ENCODE measurements at regions of chr19 and their contacts with region 1.

Region 1: GRCh38 chr19:38402967-38403861 is at the start of gene FAM98C:
- DNase-seq: peak; percentile 89 to 97 (median 96)
- H3K4me3 ChIP-seq: peak within 1 kb of the TSS; percentile 57 to 99 (median 91)
- H3K27ac ChIP-seq: peak within 1 kb of the TSS; percentile 20 to 97 (median 89)
- H3K27me3 ChIP-seq: no peaks in the 10 kb centered on the region
- CTCF ChIP-seq: peak; percentile 95 to 100 (median 100)
- total RNA-seq, gene FAM98C: 31.5 to 65.9 (median 44.2) TPM

Region 2: GRCh38 chr19:38374429-38375176 is 28.6 kb before region 1 on chr19 and contains the start of gene PSMD8:
- intact Hi-C with region 1: loop called in 1 of 2 experiments (anchors 2 kb)
- DNase-seq: peak; percentile 99 to 100 (median 100)
- H3K4me3 ChIP-seq: peak within 1 kb of the TSS; percentile 63 to 99 (median 93)
- H3K27ac ChIP-seq: peak within 1 kb of the TSS; percentile 66 to 97 (median 90)
- H3K27me3 ChIP-seq: no peaks in the 10 kb centered on the region
- CTCF ChIP-seq: peak in 55 of 56 donors; percentile 17 to 87 (median 55)
- total RNA-seq, gene PSMD8: 65.8 to 185 (median 140) TPM

Region 3: GRCh38 chr19:38618590-38619360 is 215.6 kb after region 1 on chr19 and contains the start of gene EIF3K:
- intact Hi-C with region 1: loop called (anchors 5 kb)
- DNase-seq: peak; percentile 96 to 99 (median 99)
- H3K4me3 ChIP-seq: peak within 1 kb of the TSS; percentile 61 to 100 (median 95)
- H3K27ac ChIP-seq: peak within 1 kb of the TSS; percentile 10 to 95 (median 87)
- H3K27me3 ChIP-seq: no peaks in the 10 kb centered on the region
- CTCF ChIP-seq: peak in 38 of 56 donors; percentile 7 to 58 (median 34)
- total RNA-seq, gene EIF3K: 165 to 292 (median 241) TPM

Region 4: GRCh38 chr19:38634757-38635482 is 231.7 kb after region 1 on chr19:
- intact Hi-C with region 1: loop called (anchors 2 to 5 kb)
- DNase-seq: peak in 9 of 10 donors; percentile 62 to 80 (median 73)
- H3K4me3 ChIP-seq: peak overlapping the region in 1 of 59 donors; percentile 12
- H3K27ac ChIP-seq: peak overlapping the region in 52 of 59 donors; percentile 19 to 84 (median 66)
- H3K27me3 ChIP-seq: no peaks in the 10 kb centered on the region
- CTCF ChIP-seq: peak; percentile 82 to 98 (median 96)

Measured in dorsolateral prefrontal cortex (tissue), 120 donors.